Activated CD8-positive, alpha-beta memory T cell treated with anti-CD3 and anti-CD28 coated beads, Interleukin-2, amount 10 ng/mL, durations not matched to agents 7 days and 5 days (primary cell): ENCODE measurements at regions of chr22 and their contacts with region 1.

Region 1: DNA sequence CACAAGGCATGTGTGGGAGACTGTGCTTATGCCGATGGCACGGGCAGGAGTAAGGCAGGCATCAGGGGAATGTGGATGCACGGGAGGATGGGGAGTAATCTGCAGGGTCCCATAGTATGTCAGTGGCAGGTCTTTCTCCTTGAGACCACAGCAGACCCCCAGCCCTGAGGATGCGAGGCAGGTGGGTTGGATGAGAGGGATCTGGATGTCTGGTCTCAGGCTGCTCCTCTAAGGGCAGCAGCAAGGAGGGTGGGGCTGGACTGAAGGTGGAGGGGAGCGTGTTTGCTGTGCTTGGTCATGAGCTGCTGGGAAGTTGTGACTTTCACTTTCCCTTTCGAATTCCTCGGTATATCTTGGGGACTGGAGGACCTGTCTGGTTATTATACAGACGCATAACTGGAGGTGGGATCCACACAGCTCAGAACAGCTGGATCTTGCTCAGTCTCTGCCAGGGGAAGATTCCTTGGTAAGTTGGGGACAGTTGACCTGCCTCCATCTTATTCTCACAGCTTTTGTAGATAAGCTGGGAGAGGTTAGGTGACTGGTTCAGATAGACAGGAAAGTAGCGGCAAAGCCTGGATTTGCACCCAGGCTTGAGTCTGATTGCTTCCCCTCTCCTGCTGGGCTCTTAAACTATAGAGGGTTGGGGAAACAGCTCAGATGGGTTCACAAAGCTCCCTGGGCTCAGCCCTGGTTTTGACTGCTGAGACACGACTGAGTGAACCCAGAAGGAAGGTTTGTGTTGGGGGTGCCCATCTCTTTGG is at the start of gene APOL1:
- DNase-seq: peak; percentile 80
- ATAC-seq: peak; percentile 93
- H3K4me3 Mint-ChIP-seq: peak within 1 kb of the TSS; percentile 90
- H3K27ac Mint-ChIP-seq: peak within 1 kb of the TSS; percentile 85
- H3K4me1 Mint-ChIP-seq: peaks cover 55% of the 10 kb centered on the region
- H3K27me3 Mint-ChIP-seq: no peaks in the 10 kb centered on the region
- total RNA-seq, gene APOL1: 55.6 to 61.6 TPM

Region 2: DNA sequence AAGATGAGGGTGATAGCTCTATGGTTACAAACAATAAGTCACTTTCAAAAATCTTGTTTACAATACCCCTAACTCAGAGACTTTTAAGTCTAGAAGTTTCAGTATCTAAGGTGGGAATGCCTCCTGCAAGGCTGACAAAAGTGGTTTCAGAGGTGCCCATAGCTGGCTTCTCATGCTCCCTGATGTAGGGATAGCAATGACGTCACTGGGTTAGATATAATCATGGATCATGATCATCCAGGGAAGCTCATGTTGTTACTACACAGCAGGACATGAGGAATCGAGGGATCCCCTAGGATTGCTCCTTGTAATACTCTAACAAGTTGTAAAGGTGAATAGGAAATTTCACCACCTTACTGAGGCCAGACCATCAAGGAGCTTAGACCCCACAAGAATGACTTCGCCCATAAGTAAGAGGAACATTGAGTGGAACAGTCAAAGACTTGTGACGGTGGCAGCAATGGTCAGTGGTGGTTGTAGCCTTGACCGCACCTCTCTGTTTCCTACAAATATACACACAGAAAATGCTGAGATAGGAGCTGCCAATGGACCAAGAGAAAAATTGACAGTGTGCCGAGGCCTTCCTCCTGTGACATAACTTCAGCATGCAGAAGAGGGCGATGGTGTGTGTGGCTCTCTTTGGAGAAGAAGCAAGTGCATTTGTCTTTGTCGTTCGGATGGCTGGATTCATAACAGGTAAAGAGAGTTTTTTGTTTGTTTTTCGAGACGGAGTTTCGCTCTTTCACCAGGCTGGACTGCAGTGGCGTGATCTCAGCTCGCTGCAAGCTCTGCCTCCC is 66.9 kb before region 1 on chr22:
- CTCF ChIA-PET with region 1: no interaction called
- DNase-seq: no peak
- ATAC-seq: no peak
- H3K4me3 Mint-ChIP-seq: no peak overlapping the region
- H3K27ac Mint-ChIP-seq: no peak overlapping the region
- H3K4me1 Mint-ChIP-seq: no peaks in the 10 kb centered on the region
- H3K27me3 Mint-ChIP-seq: peaks cover 6% of the 10 kb centered on the region

Region 3: DNA sequence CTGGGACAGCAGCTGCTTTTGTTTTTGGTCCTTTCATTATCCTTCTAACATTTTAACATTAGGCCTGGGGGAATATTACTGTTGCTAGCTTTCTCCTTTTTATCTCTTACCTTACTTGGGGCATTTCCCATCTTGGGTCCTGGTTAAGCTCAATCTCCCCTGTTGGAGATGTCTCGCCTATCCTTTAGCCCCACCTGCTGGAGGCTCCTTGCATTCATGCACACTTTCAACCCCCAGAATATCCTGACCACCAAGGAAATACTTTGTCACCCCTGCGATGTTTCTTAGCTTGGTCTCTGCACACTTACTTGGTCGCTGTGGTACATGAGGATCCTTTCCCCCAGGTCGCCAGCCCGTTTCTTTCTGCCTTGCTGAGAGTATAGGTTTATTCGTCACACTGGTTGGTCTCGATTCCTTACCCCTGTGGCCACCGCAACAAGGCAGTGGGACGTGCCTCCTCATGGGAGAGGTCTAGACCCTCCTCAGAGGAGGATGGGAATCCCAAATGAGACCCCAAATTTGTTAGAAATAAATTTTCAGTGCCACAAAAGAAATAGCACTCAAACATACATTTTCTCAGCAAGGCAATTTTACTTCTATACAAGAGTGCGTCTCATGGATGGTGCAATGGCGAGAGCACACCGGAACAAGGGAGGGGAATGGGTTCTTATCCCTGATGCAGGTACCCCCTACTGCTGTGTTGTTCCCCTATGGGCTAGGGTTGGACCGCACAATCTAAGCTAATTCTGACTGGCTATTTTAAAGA is 233.9 kb after region 1 on chr22:
- CTCF ChIA-PET with region 1: interaction called, 10 read pairs
- DNase-seq: peak; percentile 73
- ATAC-seq: no peak
- H3K4me3 Mint-ChIP-seq: no peak overlapping the region
- H3K27ac Mint-ChIP-seq: no peak overlapping the region
- H3K4me1 Mint-ChIP-seq: peaks cover 11% of the 10 kb centered on the region
- H3K27me3 Mint-ChIP-seq: no peaks in the 10 kb centered on the region